ENCODE measurements at regions of chr10 and their contacts with region 1.

Region 1: GRCh38 chr10:90862908-90863514 is 5.2 kb upstream of the HTR7 start:
- DNase-seq: no peak
- ATAC-seq: peak; percentile 38 to 68 (median 43)
- H3K4me3 ChIP-seq: no peak overlapping the region
- H3K27ac ChIP-seq: no peak overlapping the region
- H3K4me1 ChIP-seq: no peaks in the 10 kb centered on the region
- H3K27me3 ChIP-seq: no peaks in the 10 kb centered on the region
- CTCF ChIP-seq: peak; percentile 59 to 74 (median 70)
- POLR2A ChIP-seq: no peak

Region 2: GRCh38 chr10:90741926-90742565 is 121.0 kb before region 1 on chr10:
- intact Hi-C with region 1: loop called in 1 of 2 experiments (anchors 10 kb)
- DNase-seq: no peak
- ATAC-seq: peak; percentile 50 to 73 (median 68)
- H3K4me3 ChIP-seq: no peak overlapping the region
- H3K27ac ChIP-seq: no peak overlapping the region
- H3K4me1 ChIP-seq: no peaks in the 10 kb centered on the region
- H3K27me3 ChIP-seq: no peaks in the 10 kb centered on the region
- CTCF ChIP-seq: no peak
- POLR2A ChIP-seq: no peak

Region 3: DNA sequence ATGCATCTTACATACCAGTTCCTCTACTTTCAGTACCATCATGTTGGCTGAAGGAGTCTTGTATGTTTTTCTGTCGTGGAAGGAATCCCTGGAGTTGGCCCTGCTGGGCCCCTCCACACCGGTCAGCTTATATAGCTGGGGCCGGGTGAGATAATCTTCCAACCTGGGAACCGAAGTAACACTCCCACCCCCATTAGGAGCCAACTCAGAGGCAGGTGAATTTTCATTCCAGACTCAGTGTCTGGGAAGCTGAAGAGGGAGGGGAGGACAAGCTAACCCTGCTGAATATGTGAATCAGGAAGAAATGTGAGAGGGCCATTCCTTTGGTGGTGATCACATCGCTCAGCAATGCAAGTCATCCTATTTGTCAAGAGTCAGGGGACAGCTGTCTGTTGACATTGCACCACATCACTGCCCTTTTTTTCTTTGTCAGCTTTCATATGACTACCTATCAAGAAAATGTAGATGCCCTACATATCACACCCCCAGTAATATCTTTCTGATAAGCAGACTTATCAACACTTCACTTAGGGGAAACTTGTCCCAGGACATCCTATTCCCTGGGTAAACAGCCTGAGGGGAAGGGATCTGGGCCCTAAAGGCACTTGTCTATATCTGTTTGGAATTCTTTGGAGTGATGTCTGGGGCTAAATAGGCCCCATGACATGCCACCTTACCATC is 58.1 kb after region 1 on chr10 and contains the start of gene ANKRD1:
- intact Hi-C with region 1: no loop called
- DNase-seq: no peak
- ATAC-seq: peak in 2 of 4 donors; percentile 10 to 85
- H3K4me3 ChIP-seq: no peak within 1 kb of the TSS
- H3K27ac ChIP-seq: no peak within 1 kb of the TSS
- H3K4me1 ChIP-seq: no peaks in the 10 kb centered on the region
- H3K27me3 ChIP-seq: no peaks in the 10 kb centered on the region
- CTCF ChIP-seq: no peak
- POLR2A ChIP-seq: no peak
- total RNA-seq, gene ANKRD1: 0.34 to 5.0 (median 4.7) TPM in 5 of 6 experiments, not detected in the other

Region 4: GRCh38 chr10:91220194-91220953 is 357.4 kb after region 1 on chr10 and contains the start of gene PCGF5:
- intact Hi-C with region 1: no loop called
- DNase-seq: peak; percentile 96 to 97 (median 96)
- ATAC-seq: peak; percentile 97 to 100 (median 98)
- H3K4me3 ChIP-seq: peak within 1 kb of the TSS; percentile 69 to 94 (median 85)
- H3K27ac ChIP-seq: peak within 1 kb of the TSS; percentile 89 to 94 (median 94)
- H3K4me1 ChIP-seq: peaks cover 0 to 17% (median 8%) of the 10 kb centered on the region in 4 donors
- H3K27me3 ChIP-seq: no peaks in the 10 kb centered on the region
- CTCF ChIP-seq: peak; percentile 24 to 56 (median 34)
- POLR2A ChIP-seq: peak; percentile 90
- total RNA-seq, gene PCGF5: 25.6 to 30.9 (median 30.0) TPM

Measured in right lobe of liver (tissue), 6 donors.